HepG2 (cell line): ENCODE measurements at regions of chr7 and their contacts with region 1.

Region 1: DNA sequence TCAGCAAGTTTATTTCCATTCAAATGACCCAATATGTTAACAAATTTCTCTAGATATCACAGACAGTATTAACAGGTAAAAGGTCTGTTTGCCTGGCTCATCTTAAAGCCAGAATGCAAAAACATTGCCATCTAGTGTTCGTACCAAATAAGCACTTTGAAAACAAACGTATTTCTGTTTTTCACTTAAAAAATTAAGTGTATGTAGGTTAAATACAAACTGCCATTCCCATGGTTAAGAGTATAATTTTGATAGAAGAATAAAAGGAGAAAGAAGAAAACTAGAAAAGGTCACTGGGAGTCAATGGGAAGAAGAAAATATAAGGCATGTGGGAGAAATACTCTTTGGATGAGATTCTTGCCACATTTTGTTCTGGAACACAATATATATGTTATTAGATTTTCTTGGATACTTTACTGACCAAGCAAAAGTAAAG is 51.0 kb downstream of the ORC5 start:
- DNase-seq: peak; percentile 45
- ATAC-seq: no peak
- H3K4me3 ChIP-seq: no peak overlapping the region
- H3K27ac ChIP-seq: no peak overlapping the region
- H3K4me1 ChIP-seq: 0 out of 2 replicates have a peak, but pooled peaks cover 8% of the 10 kb centered on the region
- H3K27me3 ChIP-seq: no peaks in the 10 kb centered on the region
- CTCF ChIP-seq: peak; percentile 75
- EP300 ChIP-seq: no peak
- POLR2A ChIP-seq: no peak
- RAD21 ChIP-seq: peak; percentile 66

Region 2: DNA sequence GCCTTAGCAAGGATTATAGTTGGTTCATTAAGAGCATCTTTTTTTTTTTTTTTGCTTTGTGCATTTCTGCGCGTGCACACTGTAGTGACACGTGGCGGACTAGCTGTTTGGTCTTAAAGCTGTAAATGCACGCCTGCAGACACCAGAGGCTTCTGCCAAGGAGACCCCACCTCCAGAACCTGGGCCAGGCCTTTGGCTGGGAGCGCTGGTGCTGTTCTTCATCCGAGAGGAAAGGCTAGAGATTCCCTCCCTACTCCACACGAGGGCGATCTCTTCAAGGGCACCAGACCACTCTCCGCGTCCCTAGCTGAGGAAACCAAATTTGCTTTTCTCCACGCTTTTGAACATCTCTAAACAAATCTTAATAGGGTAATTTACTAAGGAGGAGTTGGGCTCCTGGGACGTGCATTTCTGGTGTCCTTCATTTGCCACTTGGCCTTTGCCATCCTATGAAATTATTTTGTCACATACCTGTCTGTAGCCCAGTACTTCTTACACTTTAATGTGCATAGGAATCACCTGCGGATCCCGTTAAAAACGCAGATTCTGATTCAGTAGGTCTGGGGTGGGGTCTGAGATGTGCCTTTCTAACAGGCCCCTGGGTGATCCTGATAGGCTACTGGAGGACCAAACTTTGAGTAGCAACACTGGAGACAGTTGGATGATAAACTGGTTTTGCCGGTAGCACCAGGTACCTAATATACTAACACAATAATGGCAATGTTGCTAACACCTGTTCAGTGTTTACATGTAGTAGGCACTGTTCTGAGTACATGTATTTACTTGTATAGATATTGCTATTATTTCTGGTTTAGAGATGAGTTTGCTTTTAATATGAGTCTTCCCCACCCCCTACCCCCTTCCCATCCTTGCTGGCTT is 709.5 kb before region 1 on chr7:
- CTCF ChIA-PET with region 1: no interaction called
- POLR2A ChIA-PET with region 1: no interaction called
- in situ Hi-C with region 1: loop called (anchors 25 kb)
- intact Hi-C with region 1: loop called (anchors 10 kb)
- DNase-seq: peak; percentile 44
- ATAC-seq: peak; percentile 94
- H3K4me3 ChIP-seq: no peak overlapping the region
- H3K27ac ChIP-seq: no peak overlapping the region
- H3K4me1 ChIP-seq: peaks cover 20% of the 10 kb centered on the region
- H3K27me3 ChIP-seq: peaks cover 3 to 32% of the 10 kb centered on the region in 2 experiments; a peak in 4 of 5 replicates
- CTCF ChIP-seq: peak; percentile 89
- EP300 ChIP-seq: no peak
- POLR2A ChIP-seq: no peak
- RAD21 ChIP-seq: peak; percentile 76

Region 3: GRCh38 chr7:103573479-103574058 is 583.3 kb before region 1 on chr7:
- CTCF ChIA-PET with region 1: interaction called, 14 read pairs
- POLR2A ChIA-PET with region 1: no interaction called
- in situ Hi-C with region 1: loop called (anchors 5 kb)
- intact Hi-C with region 1: loop called (anchors 1 kb)
- DNase-seq: peak; percentile 7
- ATAC-seq: no peak
- H3K4me3 ChIP-seq: no peak overlapping the region
- H3K27ac ChIP-seq: no peak overlapping the region
- H3K4me1 ChIP-seq: peaks cover 6% of the 10 kb centered on the region; the same call in 1 of the 2 replicates
- H3K27me3 ChIP-seq: no peaks in the 10 kb centered on the region; a peak in 1 of 5 replicates
- CTCF ChIP-seq: peak; percentile 37
- EP300 ChIP-seq: no peak
- POLR2A ChIP-seq: no peak
- RAD21 ChIP-seq: no peak

Region 4: DNA sequence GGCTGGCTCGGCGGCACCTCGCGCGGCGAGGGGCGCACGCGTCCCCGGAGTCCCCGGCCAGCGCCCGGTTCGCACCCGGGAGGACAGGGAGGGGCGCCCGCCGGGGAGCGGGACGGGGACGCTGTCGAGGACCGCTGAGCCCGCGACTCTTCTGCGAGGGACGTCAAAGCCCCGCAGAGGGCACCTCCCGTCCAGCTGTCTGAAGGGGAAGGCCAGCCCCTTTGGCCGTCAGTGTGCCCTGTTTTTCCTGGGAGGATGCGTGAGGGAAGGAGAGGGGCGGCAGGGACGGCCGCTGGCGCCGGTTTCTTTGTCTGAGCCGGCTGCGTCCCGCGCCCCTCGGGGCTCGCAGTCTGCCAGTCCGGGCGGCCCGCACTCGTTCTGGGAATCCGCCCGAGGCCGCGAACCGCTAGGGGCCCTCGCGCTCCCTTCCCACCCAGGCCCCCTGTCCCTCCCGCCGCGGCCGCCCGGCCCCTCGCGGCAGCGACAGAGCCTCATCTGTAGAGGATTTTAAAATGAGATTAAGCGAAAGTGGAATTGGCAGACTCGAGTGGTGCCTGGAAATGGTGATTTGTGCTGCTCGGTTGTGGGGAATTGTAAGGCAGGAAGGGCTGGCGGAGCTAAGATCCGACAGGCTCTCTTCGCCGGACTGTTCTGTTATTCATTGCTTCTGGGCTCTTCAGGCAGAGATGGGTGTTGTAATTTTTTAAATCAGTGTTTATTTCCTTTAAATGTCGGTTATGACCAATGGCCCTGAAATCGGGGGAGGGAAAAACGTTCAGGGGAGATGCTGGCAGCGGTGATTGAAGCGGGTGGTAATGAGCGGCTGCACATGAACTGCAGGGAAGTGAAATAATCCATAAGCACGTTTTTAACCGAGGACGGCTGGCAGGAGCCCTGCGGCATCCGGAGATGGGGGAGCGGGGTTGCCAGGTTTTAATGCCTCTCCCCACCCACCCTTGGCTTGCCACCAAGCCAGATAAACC is 166.8 kb before region 1 on chr7:
- CTCF ChIA-PET with region 1: interaction called, 5 read pairs
- POLR2A ChIA-PET with region 1: no interaction called
- in situ Hi-C with region 1: no loop called
- intact Hi-C with region 1: loop called (anchors 10 kb)
- DNase-seq: peak; percentile 59
- ATAC-seq: peak; percentile 85
- H3K4me3 ChIP-seq: peak overlapping the region; percentile 61 to 79 (median 63)
- H3K27ac ChIP-seq: peak overlapping the region; percentile 87
- H3K4me1 ChIP-seq: peaks cover 43% of the 10 kb centered on the region
- H3K27me3 ChIP-seq: peaks cover 0 to 4% of the 10 kb centered on the region in 2 experiments; a peak in 2 of 5 replicates
- CTCF ChIP-seq: peak; percentile 55
- EP300 ChIP-seq: no peak
- POLR2A ChIP-seq: peak in 1 of 2 experiments; percentile 61; a peak in 3 of 4 replicates
- RAD21 ChIP-seq: peak; percentile 64; the same call in 1 of the 2 replicates

Region 5: DNA sequence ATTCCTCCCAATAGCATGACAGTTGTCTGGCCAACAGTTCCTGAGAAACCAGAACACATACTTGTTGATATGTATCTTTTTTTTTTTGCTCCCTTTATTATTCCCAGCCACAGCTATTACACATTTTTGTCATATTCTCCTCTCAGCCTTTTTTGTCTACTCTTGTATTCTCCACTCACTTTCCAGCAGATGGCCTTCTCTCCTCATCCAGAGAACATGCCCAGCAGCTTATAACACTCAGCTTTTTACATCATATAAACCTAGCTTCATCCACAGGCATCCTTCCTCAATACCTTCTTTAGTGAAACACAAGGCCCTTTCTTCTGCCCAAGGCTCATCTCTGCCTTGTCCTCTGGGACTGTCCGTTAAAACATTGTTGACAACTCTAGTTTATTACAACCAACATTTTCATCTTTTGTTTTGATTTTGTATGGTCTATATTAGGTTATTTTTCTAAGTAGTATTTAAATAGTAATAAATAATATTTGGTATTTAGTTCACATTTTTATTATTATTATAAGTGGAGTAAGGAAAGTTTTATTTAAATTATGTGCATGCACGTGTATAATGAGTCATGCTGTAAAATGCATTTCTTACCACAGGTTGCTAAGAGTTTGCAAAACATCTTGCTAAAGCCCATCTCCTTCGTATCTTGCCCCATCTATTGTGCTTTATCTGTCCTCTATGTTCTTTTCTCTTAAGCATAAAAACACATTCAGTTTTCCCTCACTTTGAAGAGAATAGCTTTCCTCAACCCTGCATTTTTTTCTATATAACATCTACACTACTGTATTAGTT is 50.6 kb before region 1 on chr7:
- CTCF ChIA-PET with region 1: no interaction called
- POLR2A ChIA-PET with region 1: no interaction called
- in situ Hi-C with region 1: no loop called
- intact Hi-C with region 1: loop called (anchors 10 kb)
- DNase-seq: peak; percentile 27
- ATAC-seq: peak; percentile 65
- H3K4me3 ChIP-seq: no peak overlapping the region
- H3K27ac ChIP-seq: no peak overlapping the region
- H3K4me1 ChIP-seq: peaks cover 5% of the 10 kb centered on the region
- H3K27me3 ChIP-seq: no peaks in the 10 kb centered on the region
- CTCF ChIP-seq: peak; percentile 46
- EP300 ChIP-seq: no peak
- POLR2A ChIP-seq: no peak
- RAD21 ChIP-seq: no peak